Activated CD4-positive, alpha-beta memory T cell treated with anti-CD3 and anti-CD28 coated beads for 36 hours (primary cell): ENCODE measurements at regions of chr14 and their contacts with region 1.

Region 1: DNA sequence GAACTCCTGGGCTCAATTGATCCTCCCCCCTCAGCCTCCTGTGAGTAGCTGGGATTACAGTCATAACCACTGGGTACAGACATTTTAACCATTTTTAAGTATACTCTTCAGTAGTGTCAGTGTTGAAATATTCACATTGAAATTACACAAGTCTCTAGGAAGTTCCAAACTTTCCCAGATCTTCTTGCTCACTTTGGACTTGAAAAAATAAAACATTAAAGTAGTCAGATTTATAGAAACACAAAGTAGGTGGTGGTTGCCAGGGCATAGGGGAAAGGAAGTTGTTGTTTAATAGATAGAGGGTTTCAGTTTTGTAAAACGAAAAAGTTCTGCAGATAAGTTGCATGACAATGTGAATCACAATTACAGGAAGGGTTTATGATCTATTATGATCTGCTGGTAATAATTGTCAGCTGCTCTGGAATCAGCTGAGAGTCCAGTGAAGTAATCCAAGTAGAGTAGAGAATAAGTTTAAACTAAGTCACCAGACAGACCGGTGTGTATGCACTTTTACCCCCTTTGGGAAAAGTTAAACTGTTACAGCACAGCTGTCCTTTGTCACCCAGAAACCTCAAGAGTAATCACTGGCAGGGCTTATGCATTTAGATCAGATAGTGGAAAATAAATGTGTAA is 27.4 kb downstream of the PCNX1 start:
- DNase-seq: peak; percentile 44
- H3K4me3 Mint-ChIP-seq: peak overlapping the region; percentile 62
- H3K27ac Mint-ChIP-seq: peak overlapping the region; percentile 88
- H3K4me1 Mint-ChIP-seq: peaks cover 78% of the 10 kb centered on the region
- H3K27me3 Mint-ChIP-seq: no peaks in the 10 kb centered on the region

Region 2: DNA sequence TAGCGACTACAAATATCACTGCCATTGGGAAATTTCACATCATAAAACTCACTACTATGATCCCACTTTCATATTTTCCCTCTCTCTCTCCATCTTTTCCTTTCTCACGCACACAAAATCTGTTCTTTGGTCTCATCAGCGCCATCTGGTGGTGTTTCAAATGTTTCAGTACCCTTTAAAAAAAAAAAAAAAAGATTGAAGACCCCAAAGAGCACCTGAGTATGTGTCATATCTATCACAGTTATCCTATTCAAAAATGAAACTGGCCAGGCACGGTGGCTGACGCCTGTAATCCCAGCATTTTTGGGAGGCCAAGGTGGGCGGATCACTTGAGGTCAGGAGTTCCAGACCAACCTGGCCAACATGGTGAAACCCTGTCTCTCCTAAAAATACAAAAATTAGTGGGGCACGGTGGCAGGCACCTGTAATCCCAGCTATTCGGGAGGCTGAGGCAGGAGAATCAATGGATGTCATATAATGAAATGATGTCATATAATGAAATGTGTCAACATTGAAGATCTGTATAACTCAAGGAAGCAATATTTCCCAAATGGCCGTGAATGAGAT is 220.5 kb before region 1 on chr14:
- CTCF ChIA-PET with region 1: no interaction called
- POLR2A ChIA-PET with region 1: no interaction called
- intact Hi-C with region 1: no loop called
- DNase-seq: peak; percentile 32
- H3K4me3 Mint-ChIP-seq: no peak overlapping the region
- H3K27ac Mint-ChIP-seq: no peak overlapping the region
- H3K4me1 Mint-ChIP-seq: peaks cover 3% of the 10 kb centered on the region
- H3K27me3 Mint-ChIP-seq: no peaks in the 10 kb centered on the region

Region 3: GRCh38 chr14:70919774-70920173 is 14.8 kb before region 1 on chr14:
- CTCF ChIA-PET with region 1: interaction called, 5 read pairs
- POLR2A ChIA-PET with region 1: interaction called, 8 read pairs
- intact Hi-C with region 1: loop called (anchors 2 kb)
- DNase-seq: peak; percentile 44
- H3K4me3 Mint-ChIP-seq: peak overlapping the region; percentile 36
- H3K27ac Mint-ChIP-seq: peak overlapping the region; percentile 79
- H3K4me1 Mint-ChIP-seq: peaks cover 86% of the 10 kb centered on the region
- H3K27me3 Mint-ChIP-seq: no peaks in the 10 kb centered on the region

Region 4: GRCh38 chr14:70972107-70972976 is 37.7 kb after region 1 on chr14:
- CTCF ChIA-PET with region 1: interaction called, 10 read pairs
- POLR2A ChIA-PET with region 1: no interaction called
- intact Hi-C with region 1: no loop called
- DNase-seq: peak; percentile 88
- H3K4me3 Mint-ChIP-seq: no peak overlapping the region
- H3K27ac Mint-ChIP-seq: peak overlapping the region; percentile 11
- H3K4me1 Mint-ChIP-seq: peaks cover 36% of the 10 kb centered on the region
- H3K27me3 Mint-ChIP-seq: no peaks in the 10 kb centered on the region